CD4-positive, alpha-beta T cell (primary cell): ENCODE measurements at regions of chr13 and their contacts with region 1.

Region 1: GRCh38 chr13:62473190-62473943 is 1057.7 kb upstream of the PCDH20 start:
- DNase-seq: no peak
- ATAC-seq: no peak
- H3K4me3 ChIP-seq: no peak overlapping the region
- H3K4me3 Mint-ChIP-seq: no peak overlapping the region
- H3K27ac ChIP-seq: no peak overlapping the region
- H3K27ac Mint-ChIP-seq: no peak overlapping the region
- H3K4me1 ChIP-seq: no peaks in the 10 kb centered on the region
- H3K4me1 Mint-ChIP-seq: no peaks in the 10 kb centered on the region
- H3K27me3 ChIP-seq: no peaks in the 10 kb centered on the region
- H3K27me3 Mint-ChIP-seq: no peaks in the 10 kb centered on the region
- CTCF ChIP-seq: no peak

Region 2: DNA sequence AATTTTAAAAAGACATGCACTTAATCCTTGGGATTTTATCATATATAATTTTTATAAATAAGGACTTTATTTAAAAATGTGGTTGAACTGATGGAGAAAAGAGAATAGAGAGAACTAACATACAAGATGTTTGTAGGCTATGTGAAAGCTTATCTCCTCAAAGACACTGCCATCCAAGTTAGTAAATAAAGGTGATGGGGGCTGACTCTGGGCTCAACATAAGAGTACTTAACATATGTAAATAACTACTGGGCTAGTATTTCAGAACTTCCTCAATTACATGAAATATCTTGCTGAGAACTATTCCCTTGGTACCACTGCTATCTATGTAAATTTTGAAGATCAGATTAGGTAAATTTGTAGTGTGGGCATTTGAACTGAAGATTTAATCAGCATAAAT is 40.5 kb before region 1 on chr13:
- CTCF ChIA-PET with region 1: no interaction called
- POLR2A ChIA-PET with region 1: no interaction called
- intact Hi-C with region 1: loop called in 1 of 2 experiments (anchors 2 kb)
- DNase-seq: no peak
- ATAC-seq: no peak
- H3K4me3 ChIP-seq: no peak overlapping the region
- H3K4me3 Mint-ChIP-seq: no peak overlapping the region
- H3K27ac ChIP-seq: no peak overlapping the region
- H3K27ac Mint-ChIP-seq: no peak overlapping the region
- H3K4me1 ChIP-seq: no peaks in the 10 kb centered on the region
- H3K4me1 Mint-ChIP-seq: no peaks in the 10 kb centered on the region
- H3K27me3 ChIP-seq: no peaks in the 10 kb centered on the region
- H3K27me3 Mint-ChIP-seq: no peaks in the 10 kb centered on the region
- CTCF ChIP-seq: no peak

Region 3: GRCh38 chr13:62537593-62537992 is 64.2 kb after region 1 on chr13:
- CTCF ChIA-PET with region 1: no interaction called
- POLR2A ChIA-PET with region 1: no interaction called
- intact Hi-C with region 1: no loop called
- DNase-seq: no peak
- ATAC-seq: no peak
- H3K4me3 ChIP-seq: no peak overlapping the region
- H3K4me3 Mint-ChIP-seq: no peak overlapping the region
- H3K27ac ChIP-seq: no peak overlapping the region
- H3K27ac Mint-ChIP-seq: no peak overlapping the region
- H3K4me1 ChIP-seq: no peaks in the 10 kb centered on the region
- H3K4me1 Mint-ChIP-seq: no peaks in the 10 kb centered on the region
- H3K27me3 ChIP-seq: no peaks in the 10 kb centered on the region
- H3K27me3 Mint-ChIP-seq: no peaks in the 10 kb centered on the region
- CTCF ChIP-seq: no peak